Activated B cell treated with CpG ODN at 0.5 μM for 24 hours (primary cell): ENCODE measurements at regions of chr2 and their contacts with region 1.

Region 1: GRCh38 chr2:232550354-232551249 is at the starts of genes EIF4E2 and TIGD1:
- DNase-seq: peak; percentile 86
- ATAC-seq: peak; percentile 85
- H3K4me3 Mint-ChIP-seq: peak within 1 kb of the TSS; percentile 98
- H3K27ac Mint-ChIP-seq: peak within 1 kb of the TSS; percentile 99
- H3K4me1 Mint-ChIP-seq: peaks cover 63% of the 10 kb centered on the region
- H3K27me3 Mint-ChIP-seq: no peaks in the 10 kb centered on the region
- CTCF ChIP-seq: no peak
- total RNA-seq, gene EIF4E2: 63.2 and 67.2 TPM in 2 replicates
- total RNA-seq, gene TIGD1: 8.1 and 8.8 TPM in 2 replicates

Region 2: GRCh38 chr2:232563580-232563979 is 13.0 kb after region 1 on chr2:
- CTCF ChIA-PET with region 1: interaction called, 4 read pairs
- POLR2A ChIA-PET with region 1: interaction called, 11 read pairs
- intact Hi-C with region 1: loop called (anchors 1 kb)
- DNase-seq: no peak
- ATAC-seq: no peak
- H3K4me3 Mint-ChIP-seq: no peak overlapping the region
- H3K27ac Mint-ChIP-seq: peak overlapping the region; percentile 12
- H3K4me1 Mint-ChIP-seq: peaks cover 18% of the 10 kb centered on the region
- H3K27me3 Mint-ChIP-seq: no peaks in the 10 kb centered on the region
- CTCF ChIP-seq: no peak

Region 3: GRCh38 chr2:232588680-232589585 is 38.3 kb after region 1 on chr2:
- CTCF ChIA-PET with region 1: no interaction called
- POLR2A ChIA-PET with region 1: no interaction called
- intact Hi-C with region 1: no loop called
- DNase-seq: no peak
- ATAC-seq: no peak
- H3K4me3 Mint-ChIP-seq: no peak overlapping the region
- H3K27ac Mint-ChIP-seq: no peak overlapping the region
- H3K4me1 Mint-ChIP-seq: no peaks in the 10 kb centered on the region
- H3K27me3 Mint-ChIP-seq: no peaks in the 10 kb centered on the region
- CTCF ChIP-seq: no peak

Region 4: DNA sequence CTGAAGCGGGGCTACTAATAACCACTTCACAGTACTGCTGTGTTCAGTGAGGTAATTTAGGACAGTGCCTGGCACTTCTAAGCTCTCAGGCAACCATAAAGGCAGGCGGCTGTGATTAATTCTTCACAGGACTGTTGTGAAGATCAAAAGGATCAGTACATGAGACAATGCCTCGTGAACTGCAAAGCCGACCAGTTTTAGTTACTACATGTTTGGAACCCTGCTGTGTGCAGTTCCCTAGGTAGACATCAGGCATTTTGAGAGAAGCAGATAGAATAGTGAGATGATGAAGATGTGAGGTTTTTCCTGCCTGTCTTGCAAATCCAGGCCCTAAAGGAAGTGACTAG is 101.9 kb after region 1 on chr2:
- CTCF ChIA-PET with region 1: no interaction called
- POLR2A ChIA-PET with region 1: no interaction called
- intact Hi-C with region 1: no loop called
- DNase-seq: no peak
- ATAC-seq: no peak
- H3K4me3 Mint-ChIP-seq: no peak overlapping the region
- H3K27ac Mint-ChIP-seq: no peak overlapping the region
- H3K4me1 Mint-ChIP-seq: no peaks in the 10 kb centered on the region
- H3K27me3 Mint-ChIP-seq: peaks cover 6% of the 10 kb centered on the region
- CTCF ChIP-seq: no peak

Region 5: GRCh38 chr2:232697100-232697865 is 146.7 kb after region 1 on chr2 and contains the start of gene GIGYF2:
- CTCF ChIA-PET with region 1: no interaction called
- POLR2A ChIA-PET with region 1: no interaction called
- intact Hi-C with region 1: loop called (anchors 2 kb)
- DNase-seq: peak; percentile 89
- ATAC-seq: peak; percentile 86
- H3K4me3 Mint-ChIP-seq: peak within 1 kb of the TSS; percentile 89
- H3K27ac Mint-ChIP-seq: peak within 1 kb of the TSS; percentile 79
- H3K4me1 Mint-ChIP-seq: peaks cover 33% of the 10 kb centered on the region
- H3K27me3 Mint-ChIP-seq: no peaks in the 10 kb centered on the region
- CTCF ChIP-seq: no peak
- total RNA-seq, gene GIGYF2: 68.9 and 77.9 TPM in 2 replicates